Stomach (tissue), 19 donors: ENCODE measurements at regions of chr4 and their contacts with region 1.

Region 1: GRCh38 chr4:76949276-76950051 is at the start of gene SEPTIN11:
- DNase-seq: peak; percentile 91 to 98
- H3K4me3 ChIP-seq: peak within 1 kb of the TSS; percentile 81 to 92 (median 89)
- H3K27ac ChIP-seq: peak within 1 kb of the TSS; percentile 89 to 92 (median 91)
- H3K4me1 ChIP-seq: peaks cover 13 to 57% (median 41%) of the 10 kb centered on the region in 4 donors
- H3K27me3 ChIP-seq: no peaks in the 10 kb centered on the region
- CTCF ChIP-seq: peak in 1 of 7 experiments; percentile 12
- EP300 ChIP-seq: no peak
- POLR2A ChIP-seq: peak in 1 of 4 donors; percentile 50
- total RNA-seq, gene SEPTIN11: 29.0 to 298 (median 201) TPM

Region 2: GRCh38 chr4:77036206-77036605 is 86.7 kb after region 1 on chr4:
- intact Hi-C with region 1: loop called (anchors 10 kb)
- DNase-seq: no peak
- H3K4me3 ChIP-seq: no peak overlapping the region
- H3K27ac ChIP-seq: no peak overlapping the region
- H3K4me1 ChIP-seq: no peaks in the 10 kb centered on the region
- H3K27me3 ChIP-seq: no peaks in the 10 kb centered on the region
- CTCF ChIP-seq: no peak
- EP300 ChIP-seq: no peak
- POLR2A ChIP-seq: no peak

Region 3: GRCh38 chr4:77104791-77105540 is 155.5 kb after region 1 on chr4:
- intact Hi-C with region 1: no loop called
- DNase-seq: peak; percentile 74 to 77
- H3K4me3 ChIP-seq: no peak overlapping the region
- H3K27ac ChIP-seq: peak overlapping the region in 4 of 5 donors; percentile 10 to 58 (median 37)
- H3K4me1 ChIP-seq: peaks cover 12 to 20% (median 14%) of the 10 kb centered on the region in 4 donors
- H3K27me3 ChIP-seq: no peaks in the 10 kb centered on the region
- CTCF ChIP-seq: no peak
- EP300 ChIP-seq: no peak
- POLR2A ChIP-seq: no peak